Naive thymus-derived CD4-positive, alpha-beta T cell (primary cell): ENCODE measurements at regions of chr21 and their contacts with region 1.

Region 1: GRCh38 chr21:26170471-26171257 is at the start of gene APP:
- DNase-seq: peak; percentile 81 to 99 (median 91)
- ATAC-seq: peak; percentile 95
- H3K4me3 ChIP-seq: peak within 1 kb of the TSS; percentile 67
- H3K4me3 Mint-ChIP-seq: peak within 1 kb of the TSS; percentile 91 to 99 (median 96)
- H3K27ac ChIP-seq: peak within 1 kb of the TSS; percentile 68
- H3K27ac Mint-ChIP-seq: peak within 1 kb of the TSS; percentile 68 to 94 (median 79)
- H3K4me1 ChIP-seq: peaks cover 0 to 6% of the 10 kb centered on the region in 2 donors
- H3K4me1 Mint-ChIP-seq: peaks cover 5 to 37% (median 22%) of the 10 kb centered on the region in 7 donors
- H3K27me3 ChIP-seq: no peaks in the 10 kb centered on the region
- H3K27me3 Mint-ChIP-seq: no peaks in the 10 kb centered on the region
- total RNA-seq, gene APP: 43.1 to 68.0 (median 56.2) TPM

Region 2: DNA sequence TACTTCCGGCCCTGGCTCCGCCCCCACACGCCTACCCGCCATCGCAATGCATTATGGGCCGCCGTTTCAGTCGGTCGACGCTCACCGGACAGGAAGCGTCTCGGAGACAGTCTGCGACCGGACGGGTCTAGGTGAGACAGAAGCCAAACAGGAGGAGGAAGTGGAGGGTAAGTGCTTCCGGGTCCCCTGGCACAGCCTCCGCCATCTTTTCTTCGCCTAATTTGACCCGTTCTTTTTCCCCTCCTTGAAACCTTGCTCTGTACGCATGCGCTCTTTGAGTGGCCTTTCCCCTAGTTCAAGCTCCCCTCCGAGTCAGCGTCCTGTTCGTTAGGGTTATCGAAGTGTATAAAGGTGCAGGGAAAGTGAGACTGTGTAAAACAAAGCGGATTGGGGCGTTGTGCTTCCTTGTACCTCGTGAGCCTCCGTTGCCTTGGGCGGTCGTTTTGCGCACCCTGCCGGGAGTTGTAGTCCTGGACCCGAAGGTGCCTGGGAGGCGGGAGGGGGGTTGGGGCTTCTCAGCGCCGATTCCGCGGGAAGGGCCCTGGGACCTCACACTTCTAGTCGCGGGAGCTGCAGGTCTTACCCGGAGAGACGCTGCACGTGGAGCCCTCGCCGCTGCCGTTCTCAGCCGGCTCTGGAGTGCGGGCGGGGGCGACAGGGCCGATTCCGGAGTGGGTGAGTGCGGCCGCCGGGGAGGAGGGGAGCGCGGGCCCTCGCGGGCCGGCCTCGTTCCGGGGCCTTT is 435.6 kb before region 1 on chr21 and contains the starts of genes ATP5PF and GABPA:
- CTCF ChIA-PET with region 1: interaction called, 5 read pairs
- POLR2A ChIA-PET with region 1: interaction called, 4 read pairs
- intact Hi-C with region 1: loop called (anchors 1 to 2 kb)
- DNase-seq: peak; percentile 95 to 99 (median 97)
- ATAC-seq: peak; percentile 96
- H3K4me3 ChIP-seq: peak within 1 kb of the TSS; percentile 96
- H3K4me3 Mint-ChIP-seq: peak within 1 kb of the TSS; percentile 98 to 100 (median 100)
- H3K27ac ChIP-seq: peak within 1 kb of the TSS; percentile 88
- H3K27ac Mint-ChIP-seq: peak within 1 kb of the TSS; percentile 98 to 100 (median 100)
- H3K4me1 ChIP-seq: peaks cover 0 to 13% of the 10 kb centered on the region in 2 donors
- H3K4me1 Mint-ChIP-seq: peaks cover 35 to 78% (median 64%) of the 10 kb centered on the region in 7 donors
- H3K27me3 ChIP-seq: no peaks in the 10 kb centered on the region
- H3K27me3 Mint-ChIP-seq: peaks cover 0 to 4% (median 0%) of the 10 kb centered on the region in 5 donors
- total RNA-seq, gene ATP5PF: 39.5 to 124 (median 58.6) TPM
- total RNA-seq, gene GABPA: 23.1 to 31.9 (median 29.4) TPM

Region 3: GRCh38 chr21:25895565-25896205 is 275.0 kb before region 1 on chr21:
- CTCF ChIA-PET with region 1: interaction called, 15 read pairs
- POLR2A ChIA-PET with region 1: no interaction called
- intact Hi-C with region 1: loop called (anchors 1 kb)
- DNase-seq: peak in 7 of 9 donors; percentile 18 to 55 (median 42)
- ATAC-seq: peak; percentile 83
- H3K4me3 ChIP-seq: no peak overlapping the region
- H3K4me3 Mint-ChIP-seq: peak overlapping the region in 1 of 10 donors; percentile 22
- H3K27ac ChIP-seq: no peak overlapping the region
- H3K27ac Mint-ChIP-seq: peak overlapping the region in 1 of 9 donors; percentile 43
- H3K4me1 ChIP-seq: peaks cover 0 to 4% of the 10 kb centered on the region in 2 donors
- H3K4me1 Mint-ChIP-seq: peaks cover 6 to 21% (median 17%) of the 10 kb centered on the region in 7 donors
- H3K27me3 ChIP-seq: no peaks in the 10 kb centered on the region
- H3K27me3 Mint-ChIP-seq: no peaks in the 10 kb centered on the region

Region 4: DNA sequence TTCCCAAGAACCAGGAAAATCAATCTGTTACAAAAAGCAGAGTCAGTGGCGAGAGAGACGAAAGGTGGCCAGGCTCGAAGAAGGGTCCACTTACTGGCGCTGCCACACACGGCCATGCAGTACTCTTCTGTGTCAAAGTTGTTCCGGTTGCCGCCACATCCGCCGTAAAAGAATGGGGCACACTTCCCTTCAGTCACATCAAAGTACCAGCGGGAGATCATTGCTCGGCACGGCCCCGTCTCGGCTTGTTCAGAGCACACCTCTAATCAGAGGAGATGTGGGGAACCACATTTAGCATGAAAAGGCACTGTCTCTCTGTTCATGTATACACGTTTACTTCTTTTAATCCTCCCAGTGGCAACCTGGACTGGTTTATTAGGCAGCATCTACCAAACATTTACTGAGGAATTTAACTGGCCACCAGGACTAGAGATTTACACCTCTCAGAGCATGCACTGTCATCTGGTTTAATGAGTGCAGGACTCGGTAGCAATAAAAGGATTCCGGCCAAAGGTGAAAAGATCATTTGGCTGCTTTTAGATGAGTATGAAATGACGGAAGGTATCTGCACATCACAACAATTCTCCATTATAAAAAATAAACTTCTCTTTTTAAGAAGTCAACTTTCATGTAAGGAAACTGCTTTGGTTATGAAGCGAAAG is 170.6 kb before region 1 on chr21:
- CTCF ChIA-PET with region 1: no interaction called
- POLR2A ChIA-PET with region 1: no interaction called
- intact Hi-C with region 1: loop called in 1 of 2 experiments (anchors 5 kb)
- DNase-seq: peak in 8 of 9 donors; percentile 16 to 64 (median 40)
- ATAC-seq: peak; percentile 82
- H3K4me3 ChIP-seq: peak overlapping the region; percentile 12
- H3K4me3 Mint-ChIP-seq: peak overlapping the region; percentile 43 to 73 (median 61)
- H3K27ac ChIP-seq: no peak overlapping the region
- H3K27ac Mint-ChIP-seq: peak overlapping the region in 4 of 9 donors; percentile 4 to 39 (median 18)
- H3K4me1 ChIP-seq: no peaks in the 10 kb centered on the region
- H3K4me1 Mint-ChIP-seq: peaks cover 2 to 18% (median 11%) of the 10 kb centered on the region in 7 donors
- H3K27me3 ChIP-seq: no peaks in the 10 kb centered on the region
- H3K27me3 Mint-ChIP-seq: no peaks in the 10 kb centered on the region

Region 5: GRCh38 chr21:26148079-26148839 is 22.4 kb before region 1 on chr21:
- CTCF ChIA-PET with region 1: interaction called, 3 read pairs
- POLR2A ChIA-PET with region 1: interaction called, 8 read pairs
- intact Hi-C with region 1: loop called in 1 of 2 experiments (anchors 2 kb)
- DNase-seq: peak in 6 of 9 donors; percentile 18 to 48 (median 39)
- ATAC-seq: peak; percentile 61
- H3K4me3 ChIP-seq: no peak overlapping the region
- H3K4me3 Mint-ChIP-seq: peak overlapping the region in 9 of 10 donors; percentile 34 to 82 (median 71)
- H3K27ac ChIP-seq: no peak overlapping the region
- H3K27ac Mint-ChIP-seq: peak overlapping the region in 5 of 9 donors; percentile 9 to 81 (median 45)
- H3K4me1 ChIP-seq: peaks cover 0 to 18% of the 10 kb centered on the region in 2 donors
- H3K4me1 Mint-ChIP-seq: peaks cover 13 to 30% (median 21%) of the 10 kb centered on the region in 7 donors
- H3K27me3 ChIP-seq: no peaks in the 10 kb centered on the region
- H3K27me3 Mint-ChIP-seq: no peaks in the 10 kb centered on the region

Region 6: DNA sequence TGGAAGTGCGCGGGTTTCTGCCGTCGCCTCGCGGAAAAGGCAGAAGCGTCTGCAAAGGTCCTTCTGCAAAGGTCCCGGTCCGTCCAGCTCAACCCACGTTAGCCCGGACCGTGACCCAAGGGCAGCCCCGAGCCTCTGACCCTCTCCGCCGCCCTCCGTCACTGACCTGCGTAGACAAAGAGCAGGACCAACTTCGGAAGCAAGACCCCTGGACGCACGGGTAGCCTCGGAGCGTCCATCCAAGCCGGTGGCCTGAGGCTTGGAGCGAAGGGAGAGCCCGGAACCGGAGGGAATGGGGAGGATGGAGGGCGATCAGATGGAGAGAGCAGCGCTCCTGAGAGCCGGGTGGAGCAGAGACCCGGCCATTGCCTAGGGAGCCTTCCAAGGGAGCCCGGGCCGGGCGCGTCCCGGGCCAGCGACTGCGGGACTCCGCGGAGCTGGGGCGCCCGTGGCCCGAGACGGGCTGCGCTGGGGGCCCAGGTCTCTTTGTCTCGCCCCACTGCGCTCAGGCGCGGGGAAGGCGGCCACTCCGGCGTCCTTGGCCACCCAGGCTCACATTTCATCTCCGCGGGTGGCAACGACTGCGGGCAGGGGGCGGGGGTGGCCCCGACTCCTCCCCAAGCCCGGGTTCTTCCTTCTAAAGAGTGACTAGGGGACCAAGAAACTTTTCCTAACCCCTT is 402.2 kb after region 1 on chr21 and contains the start of gene CYYR1:
- CTCF ChIA-PET with region 1: no interaction called
- POLR2A ChIA-PET with region 1: no interaction called
- intact Hi-C with region 1: no loop called
- DNase-seq: no peak
- ATAC-seq: no peak
- H3K4me3 ChIP-seq: no peak within 1 kb of the TSS
- H3K4me3 Mint-ChIP-seq: peak within 1 kb of the TSS in 8 of 10 donors; percentile 24 to 79 (median 48)
- H3K27ac ChIP-seq: no peak within 1 kb of the TSS
- H3K27ac Mint-ChIP-seq: no peak within 1 kb of the TSS
- H3K4me1 ChIP-seq: no peaks in the 10 kb centered on the region
- H3K4me1 Mint-ChIP-seq: peaks cover 0 to 10% (median 5%) of the 10 kb centered on the region in 7 donors
- H3K27me3 ChIP-seq: no peaks in the 10 kb centered on the region
- H3K27me3 Mint-ChIP-seq: peaks cover 27 to 48% (median 41%) of the 10 kb centered on the region in 5 donors
- total RNA-seq, gene CYYR1: not detected

Region 7: GRCh38 chr21:26624983-26625519 is 454.4 kb after region 1 on chr21:
- CTCF ChIA-PET with region 1: no interaction called
- POLR2A ChIA-PET with region 1: no interaction called
- intact Hi-C with region 1: no loop called
- DNase-seq: no peak
- ATAC-seq: no peak
- H3K4me3 ChIP-seq: no peak overlapping the region
- H3K4me3 Mint-ChIP-seq: no peak overlapping the region
- H3K27ac ChIP-seq: no peak overlapping the region
- H3K27ac Mint-ChIP-seq: no peak overlapping the region
- H3K4me1 ChIP-seq: no peaks in the 10 kb centered on the region
- H3K4me1 Mint-ChIP-seq: no peaks in the 10 kb centered on the region
- H3K27me3 ChIP-seq: no peaks in the 10 kb centered on the region
- H3K27me3 Mint-ChIP-seq: peaks cover 0 to 4% (median 0%) of the 10 kb centered on the region in 5 donors

Region 8: DNA sequence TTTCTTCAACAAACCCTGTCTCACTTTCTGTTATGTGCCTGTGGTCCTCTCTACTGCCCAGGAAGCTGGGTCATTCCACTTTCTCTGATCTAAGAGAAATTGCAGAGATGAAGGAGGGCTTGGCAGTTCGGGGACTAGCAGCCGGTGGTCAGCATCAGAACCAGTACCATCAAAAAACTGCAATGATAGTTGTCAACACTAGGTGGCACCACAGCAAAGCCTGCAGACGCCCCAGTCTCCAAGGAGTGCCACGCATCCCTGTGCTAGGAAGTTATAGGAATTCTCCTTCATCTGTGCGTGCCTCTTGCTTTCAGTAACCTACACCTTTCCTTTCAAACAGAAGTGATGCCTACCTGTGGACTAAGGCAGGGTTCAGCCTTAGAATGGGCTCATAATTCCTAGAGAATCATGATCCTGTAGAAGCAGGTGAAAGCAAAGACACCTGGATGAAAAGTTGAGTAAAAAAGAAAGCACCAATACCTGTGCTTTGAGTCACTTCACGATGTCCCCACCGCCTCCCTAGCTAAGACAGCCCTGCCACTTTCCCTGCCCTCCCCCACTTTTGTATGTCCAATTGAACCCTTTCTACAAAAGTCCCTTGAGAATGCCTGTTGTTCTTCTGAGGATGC is 545.3 kb after region 1 on chr21:
- CTCF ChIA-PET with region 1: no interaction called
- POLR2A ChIA-PET with region 1: no interaction called
- intact Hi-C with region 1: loop called in 1 of 2 experiments (anchors 5 kb)
- DNase-seq: peak in 4 of 9 donors; percentile 4 to 15 (median 5)
- ATAC-seq: peak; percentile 46
- H3K4me3 ChIP-seq: no peak overlapping the region
- H3K4me3 Mint-ChIP-seq: no peak overlapping the region
- H3K27ac ChIP-seq: no peak overlapping the region
- H3K27ac Mint-ChIP-seq: no peak overlapping the region
- H3K4me1 ChIP-seq: no peaks in the 10 kb centered on the region
- H3K4me1 Mint-ChIP-seq: no peaks in the 10 kb centered on the region
- H3K27me3 ChIP-seq: no peaks in the 10 kb centered on the region
- H3K27me3 Mint-ChIP-seq: peaks cover 2 to 14% (median 6%) of the 10 kb centered on the region in 5 donors